H1 (cell line): ENCODE measurements at regions of chr12 and their contacts with region 1.

Region 1: GRCh38 chr12:4107436-4107878 is 166.1 kb upstream of the CCND2 start:
- DNase-seq: peak; percentile 15 to 53
- H3K4me3 ChIP-seq: no peak overlapping the region
- H3K27ac ChIP-seq: no peak overlapping the region
- H3K4me1 ChIP-seq: peaks cover 0 to 6% (median 0%) of the 10 kb centered on the region in 4 experiments; a peak in 2 of 7 replicates
- H3K27me3 ChIP-seq: no peaks in the 10 kb centered on the region
- CTCF ChIP-seq: peak in 2 of 3 experiments; percentile 68 to 79; a peak in 3 of 4 replicates
- EP300 ChIP-seq: no peak
- POLR2A ChIP-seq: no peak
- RAD21 ChIP-seq: peak; percentile 79 to 90

Region 2: GRCh38 chr12:3998968-3999826 is 108.3 kb before region 1 on chr12:
- CTCF ChIA-PET with region 1: interaction called, 10 read pairs
- POLR2A ChIA-PET with region 1: no interaction called
- DNase-seq: no peak
- H3K4me3 ChIP-seq: no peak overlapping the region
- H3K27ac ChIP-seq: no peak overlapping the region
- H3K4me1 ChIP-seq: 0 out of 7 replicates have a peak, but pooled peaks cover 0 to 2% (median 0%) of the 10 kb centered on the region in 4 experiments
- H3K27me3 ChIP-seq: peaks cover 0 to 3% (median under 1%) of the 10 kb centered on the region in 4 experiments; a peak in 1 of 7 replicates
- CTCF ChIP-seq: no peak
- EP300 ChIP-seq: no peak
- POLR2A ChIP-seq: no peak
- RAD21 ChIP-seq: no peak

Region 3: GRCh38 chr12:4056910-4057845 is 50.3 kb before region 1 on chr12:
- CTCF ChIA-PET with region 1: no interaction called
- POLR2A ChIA-PET with region 1: no interaction called
- DNase-seq: no peak
- H3K4me3 ChIP-seq: no peak overlapping the region
- H3K27ac ChIP-seq: no peak overlapping the region
- H3K4me1 ChIP-seq: peaks cover 0 to 4% (median 1%) of the 10 kb centered on the region in 4 experiments; a peak in 3 of 7 replicates
- H3K27me3 ChIP-seq: no peaks in the 10 kb centered on the region
- CTCF ChIP-seq: no peak
- EP300 ChIP-seq: no peak
- POLR2A ChIP-seq: no peak
- RAD21 ChIP-seq: no peak

Region 4: DNA sequence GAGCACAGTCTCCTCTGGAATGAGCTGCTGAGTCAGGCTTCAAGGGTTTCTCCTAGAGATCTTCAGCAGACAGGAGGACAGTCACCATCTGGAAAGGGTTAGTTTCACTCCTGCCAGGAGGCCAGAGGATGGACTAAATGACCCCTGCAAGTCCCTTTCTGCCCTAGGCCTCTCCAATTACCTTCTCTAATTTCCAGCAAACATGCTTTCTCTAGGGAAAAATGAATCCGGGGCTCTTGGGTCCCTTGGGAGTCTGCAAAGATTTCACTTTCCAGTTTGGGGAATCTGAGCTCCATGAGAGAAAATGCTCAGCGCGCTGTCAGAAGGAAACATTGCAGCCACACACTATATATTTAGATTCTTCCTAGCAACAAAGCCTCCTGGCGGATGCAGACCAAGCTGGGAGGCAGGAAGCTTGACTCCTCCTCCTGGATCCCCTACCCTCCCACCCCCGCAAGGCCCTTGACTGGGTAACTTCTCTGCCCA is 18.3 kb before region 1 on chr12:
- CTCF ChIA-PET with region 1: interaction called, 26 read pairs
- POLR2A ChIA-PET with region 1: no interaction called
- DNase-seq: no peak
- H3K4me3 ChIP-seq: no peak overlapping the region
- H3K27ac ChIP-seq: no peak overlapping the region
- H3K4me1 ChIP-seq: peaks cover 0 to 2% (median 0%) of the 10 kb centered on the region in 4 experiments; a peak in 1 of 7 replicates
- H3K27me3 ChIP-seq: no peaks in the 10 kb centered on the region
- CTCF ChIP-seq: no peak
- EP300 ChIP-seq: no peak
- POLR2A ChIP-seq: no peak
- RAD21 ChIP-seq: no peak

Region 5: DNA sequence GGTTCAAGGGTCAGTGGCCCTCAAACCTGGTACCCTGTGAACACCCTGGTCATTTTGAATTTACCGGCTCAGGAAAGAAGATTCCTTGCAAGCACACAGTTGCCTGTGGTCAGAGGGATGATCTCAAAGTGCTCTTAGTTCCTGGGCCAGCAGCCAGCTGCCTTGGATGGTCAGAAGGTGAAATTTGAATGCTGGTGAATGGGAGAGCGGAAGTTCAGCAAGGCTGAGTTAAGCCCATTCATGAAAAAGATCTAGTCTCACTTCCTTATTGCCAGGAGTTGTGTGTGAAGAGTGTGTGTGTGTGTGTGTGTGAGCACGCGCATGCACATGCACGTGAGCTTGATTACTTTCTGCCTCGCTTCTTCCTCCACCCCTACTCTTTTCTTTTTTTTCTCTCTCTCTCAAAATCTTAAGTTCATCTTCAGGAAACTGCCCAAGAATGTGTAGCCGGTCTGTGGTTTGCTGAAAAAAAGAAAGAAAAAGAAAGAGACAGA is 10.6 kb after region 1 on chr12:
- CTCF ChIA-PET with region 1: interaction called, 44 read pairs
- POLR2A ChIA-PET with region 1: interaction called, 6 read pairs
- DNase-seq: peak in 1 of 2 experiments; percentile 32
- H3K4me3 ChIP-seq: no peak overlapping the region
- H3K27ac ChIP-seq: no peak overlapping the region
- H3K4me1 ChIP-seq: peaks cover 3 to 10% (median 6%) of the 10 kb centered on the region in 4 experiments; a peak in 6 of 7 replicates
- H3K27me3 ChIP-seq: no peaks in the 10 kb centered on the region
- CTCF ChIP-seq: no peak
- EP300 ChIP-seq: no peak
- POLR2A ChIP-seq: no peak
- RAD21 ChIP-seq: no peak

Region 6: GRCh38 chr12:4164559-4165558 is 57.4 kb after region 1 on chr12:
- CTCF ChIA-PET with region 1: interaction called, 11 read pairs
- POLR2A ChIA-PET with region 1: no interaction called
- DNase-seq: peak; percentile 51 to 78
- H3K4me3 ChIP-seq: peak overlapping the region; percentile 44 to 65 (median 49)
- H3K27ac ChIP-seq: peak overlapping the region; percentile 73; the same call in 1 of the 2 replicates
- H3K4me1 ChIP-seq: peaks cover 4 to 18% (median 10%) of the 10 kb centered on the region in 4 experiments
- H3K27me3 ChIP-seq: peaks cover 0 to 7% (median 5%) of the 10 kb centered on the region in 4 experiments; a peak in 4 of 7 replicates
- CTCF ChIP-seq: no peak
- EP300 ChIP-seq: no peak
- POLR2A ChIP-seq: peak in 1 of 2 experiments; percentile 59; a peak in 1 of 3 replicates
- RAD21 ChIP-seq: no peak

Region 7: GRCh38 chr12:4215229-4216186 is 108.1 kb after region 1 on chr12:
- CTCF ChIA-PET with region 1: interaction called, 13 read pairs
- POLR2A ChIA-PET with region 1: no interaction called
- DNase-seq: peak in 1 of 2 experiments; percentile 40
- H3K4me3 ChIP-seq: no peak overlapping the region
- H3K27ac ChIP-seq: no peak overlapping the region
- H3K4me1 ChIP-seq: no peaks in the 10 kb centered on the region; a peak in 1 of 7 replicates
- H3K27me3 ChIP-seq: no peaks in the 10 kb centered on the region; a peak in 1 of 7 replicates
- CTCF ChIP-seq: no peak
- EP300 ChIP-seq: no peak
- POLR2A ChIP-seq: no peak
- RAD21 ChIP-seq: no peak